ENCODE measurements at regions of chr7 and their contacts with region 1.

Region 1: GRCh38 chr7:50335795-50336754 is 31.6 kb downstream of the IKZF1 start:
- DNase-seq: peak; percentile 92
- ATAC-seq: peak; percentile 45
- H3K4me3 Mint-ChIP-seq: no peak overlapping the region
- H3K27ac Mint-ChIP-seq: no peak overlapping the region
- H3K4me1 Mint-ChIP-seq: peaks cover 30% of the 10 kb centered on the region
- H3K27me3 Mint-ChIP-seq: no peaks in the 10 kb centered on the region

Region 2: DNA sequence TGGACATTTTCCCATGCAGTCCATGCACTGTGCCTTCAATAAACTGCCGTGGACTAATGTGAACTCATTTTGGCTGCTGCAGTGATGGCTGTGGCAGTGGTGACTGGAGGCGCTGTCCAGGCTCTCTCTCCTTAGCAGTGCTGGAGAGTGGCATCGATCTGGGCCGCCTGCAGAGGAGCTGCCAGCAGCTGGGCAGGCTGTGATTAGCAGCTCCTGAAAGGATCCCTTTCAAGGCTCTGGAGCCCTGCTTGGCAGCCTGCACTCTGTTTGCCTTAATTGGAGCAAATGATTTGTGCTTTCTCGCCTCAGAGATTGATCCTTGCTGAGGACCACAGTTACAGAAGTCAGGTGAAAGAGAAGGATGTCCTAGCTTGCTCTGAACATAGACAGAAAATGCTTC is 692.8 kb before region 1 on chr7:
- CTCF ChIA-PET with region 1: no interaction called
- DNase-seq: no peak
- ATAC-seq: no peak
- H3K4me3 Mint-ChIP-seq: no peak overlapping the region
- H3K27ac Mint-ChIP-seq: no peak overlapping the region
- H3K4me1 Mint-ChIP-seq: no peaks in the 10 kb centered on the region
- H3K27me3 Mint-ChIP-seq: no peaks in the 10 kb centered on the region

Region 3: GRCh38 chr7:50317221-50317678 is 18.8 kb before region 1 on chr7:
- CTCF ChIA-PET with region 1: interaction called, 40 read pairs
- DNase-seq: peak; percentile 77
- ATAC-seq: peak; percentile 75
- H3K4me3 Mint-ChIP-seq: peak overlapping the region; percentile 91
- H3K27ac Mint-ChIP-seq: peak overlapping the region; percentile 97
- H3K4me1 Mint-ChIP-seq: peaks cover 94% of the 10 kb centered on the region
- H3K27me3 Mint-ChIP-seq: no peaks in the 10 kb centered on the region

Region 4: DNA sequence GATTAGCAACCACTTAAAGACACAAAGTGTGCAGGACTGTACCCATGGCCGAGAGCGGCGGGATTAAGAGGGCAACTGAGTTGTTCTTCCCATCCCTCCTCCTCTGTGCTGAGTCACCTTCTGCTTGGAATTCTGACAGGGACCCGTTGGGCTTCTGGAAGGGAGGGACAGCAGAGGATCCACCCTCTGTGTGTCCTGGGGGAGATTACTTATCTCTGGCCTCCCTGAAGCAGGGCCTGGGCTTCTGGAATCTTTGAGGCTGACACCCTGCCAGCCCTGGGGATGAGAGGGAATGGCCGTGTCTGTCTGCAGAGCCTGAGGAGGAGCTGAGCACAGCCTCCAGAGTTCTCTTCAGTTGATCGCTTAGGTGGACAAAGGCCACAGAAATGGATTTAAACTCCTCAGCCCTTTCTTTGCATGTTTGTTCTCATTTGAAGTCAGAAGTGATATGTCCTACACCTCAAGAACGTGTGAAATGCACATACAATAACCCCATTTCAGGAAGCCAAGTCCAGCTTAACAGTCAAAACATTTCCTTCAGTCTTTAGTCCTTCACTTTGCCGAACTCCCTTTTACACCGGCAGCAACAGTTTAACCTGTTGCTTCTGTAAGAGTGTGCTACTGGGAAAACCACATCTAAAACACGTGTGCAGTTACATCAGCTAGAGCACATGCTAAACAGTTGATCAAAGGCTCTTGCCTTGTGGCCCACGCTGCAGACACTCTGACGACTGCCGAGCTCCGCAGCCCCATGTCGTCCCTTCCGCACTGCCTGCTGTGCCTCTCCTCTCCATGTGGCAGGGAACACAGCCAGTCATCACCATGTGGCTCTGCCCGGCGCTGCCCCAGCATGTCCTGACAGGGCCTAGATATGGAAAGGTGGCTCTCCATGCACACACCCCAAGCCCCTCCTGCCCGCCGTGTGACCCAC is 24.2 kb after region 1 on chr7:
- CTCF ChIA-PET with region 1: interaction called, 20 read pairs
- DNase-seq: peak; percentile 85
- ATAC-seq: peak; percentile 74
- H3K4me3 Mint-ChIP-seq: peak overlapping the region; percentile 49
- H3K27ac Mint-ChIP-seq: peak overlapping the region; percentile 96
- H3K4me1 Mint-ChIP-seq: peaks cover 97% of the 10 kb centered on the region
- H3K27me3 Mint-ChIP-seq: no peaks in the 10 kb centered on the region